Naive thymus-derived CD4-positive, alpha-beta T cell (primary cell): ENCODE measurements at regions of chr7 and their contacts with region 1.

Region 1: GRCh38 chr7:19708397-19709248 is at the start of gene POLR1F:
- DNase-seq: peak; percentile 84 to 97 (median 95)
- ATAC-seq: peak; percentile 98
- H3K4me3 ChIP-seq: peak within 1 kb of the TSS; percentile 70
- H3K4me3 Mint-ChIP-seq: peak within 1 kb of the TSS; percentile 95 to 99 (median 97)
- H3K27ac ChIP-seq: peak within 1 kb of the TSS; percentile 77
- H3K27ac Mint-ChIP-seq: peak within 1 kb of the TSS; percentile 89 to 98 (median 95)
- H3K4me1 ChIP-seq: peaks cover 19 to 23% of the 10 kb centered on the region in 2 donors
- H3K4me1 Mint-ChIP-seq: peaks cover 31 to 66% (median 57%) of the 10 kb centered on the region in 7 donors
- H3K27me3 ChIP-seq: no peaks in the 10 kb centered on the region
- H3K27me3 Mint-ChIP-seq: peaks cover 0 to 5% (median 0%) of the 10 kb centered on the region in 5 donors
- total RNA-seq, gene POLR1F: 11.8 to 27.3 (median 19.0) TPM

Region 2: GRCh38 chr7:19754521-19755116 is 46.0 kb after region 1 on chr7:
- CTCF ChIA-PET with region 1: interaction called, 4 read pairs
- POLR2A ChIA-PET with region 1: no interaction called
- intact Hi-C with region 1: loop called in 1 of 2 experiments (anchors 2 kb)
- DNase-seq: peak in 4 of 9 donors; percentile 1 to 26 (median 12)
- ATAC-seq: no peak
- H3K4me3 ChIP-seq: no peak overlapping the region
- H3K4me3 Mint-ChIP-seq: no peak overlapping the region
- H3K27ac ChIP-seq: no peak overlapping the region
- H3K27ac Mint-ChIP-seq: no peak overlapping the region
- H3K4me1 ChIP-seq: no peaks in the 10 kb centered on the region
- H3K4me1 Mint-ChIP-seq: no peaks in the 10 kb centered on the region
- H3K27me3 ChIP-seq: no peaks in the 10 kb centered on the region
- H3K27me3 Mint-ChIP-seq: peaks cover 0 to 13% (median 4%) of the 10 kb centered on the region in 5 donors

Region 3: GRCh38 chr7:19783541-19783940 is 74.9 kb after region 1 on chr7:
- CTCF ChIA-PET with region 1: no interaction called
- POLR2A ChIA-PET with region 1: no interaction called
- intact Hi-C with region 1: no loop called
- DNase-seq: no peak
- ATAC-seq: no peak
- H3K4me3 ChIP-seq: no peak overlapping the region
- H3K4me3 Mint-ChIP-seq: no peak overlapping the region
- H3K27ac ChIP-seq: no peak overlapping the region
- H3K27ac Mint-ChIP-seq: no peak overlapping the region
- H3K4me1 ChIP-seq: no peaks in the 10 kb centered on the region
- H3K4me1 Mint-ChIP-seq: no peaks in the 10 kb centered on the region
- H3K27me3 ChIP-seq: no peaks in the 10 kb centered on the region
- H3K27me3 Mint-ChIP-seq: peaks cover 0 to 12% (median 0%) of the 10 kb centered on the region in 5 donors